PC-9 (cell line): ENCODE measurements at regions of chr2 and their contacts with region 1.

Region 1: DNA sequence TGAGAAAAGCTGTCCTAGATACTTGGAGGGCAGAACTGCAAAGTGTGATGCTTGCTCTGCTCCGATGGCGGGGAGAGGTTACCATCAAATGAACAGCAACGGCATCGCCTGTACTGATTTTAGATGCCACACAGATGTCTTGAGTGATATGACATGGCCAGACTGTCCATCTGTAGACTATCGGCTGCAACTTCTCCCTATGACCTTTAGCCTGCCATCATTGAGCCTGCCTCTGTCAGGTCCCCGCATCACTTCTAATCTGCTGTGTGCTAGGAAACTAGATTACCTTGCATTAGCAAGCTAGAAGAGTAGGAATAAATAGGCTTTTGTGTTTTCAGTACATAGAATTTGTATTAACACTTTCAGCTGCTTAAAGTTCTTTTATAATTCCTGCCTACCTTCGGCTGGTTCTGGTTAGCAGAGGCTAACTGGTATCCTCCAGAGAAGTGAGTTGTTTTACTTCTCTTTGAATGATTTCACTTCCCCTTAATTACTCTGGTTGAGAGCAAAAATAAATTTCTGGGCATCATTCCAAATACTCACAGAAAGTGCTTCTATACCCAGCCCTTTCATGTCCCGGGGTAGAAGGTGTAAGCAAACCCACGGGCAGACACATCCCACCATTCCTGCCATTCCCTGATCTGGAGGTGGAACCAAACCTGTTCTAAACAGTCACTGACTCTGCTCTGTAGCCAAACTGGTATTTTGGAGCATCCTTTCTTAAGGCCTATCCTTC is 24.0 kb downstream of the GAREM2 start:
- DNase-seq: no peak
- H3K4me3 ChIP-seq: no peak overlapping the region
- H3K27ac ChIP-seq: no peak overlapping the region
- H3K4me1 ChIP-seq: no peaks in the 10 kb centered on the region
- H3K27me3 ChIP-seq: no peaks in the 10 kb centered on the region
- CTCF ChIP-seq: no peak

Region 2: DNA sequence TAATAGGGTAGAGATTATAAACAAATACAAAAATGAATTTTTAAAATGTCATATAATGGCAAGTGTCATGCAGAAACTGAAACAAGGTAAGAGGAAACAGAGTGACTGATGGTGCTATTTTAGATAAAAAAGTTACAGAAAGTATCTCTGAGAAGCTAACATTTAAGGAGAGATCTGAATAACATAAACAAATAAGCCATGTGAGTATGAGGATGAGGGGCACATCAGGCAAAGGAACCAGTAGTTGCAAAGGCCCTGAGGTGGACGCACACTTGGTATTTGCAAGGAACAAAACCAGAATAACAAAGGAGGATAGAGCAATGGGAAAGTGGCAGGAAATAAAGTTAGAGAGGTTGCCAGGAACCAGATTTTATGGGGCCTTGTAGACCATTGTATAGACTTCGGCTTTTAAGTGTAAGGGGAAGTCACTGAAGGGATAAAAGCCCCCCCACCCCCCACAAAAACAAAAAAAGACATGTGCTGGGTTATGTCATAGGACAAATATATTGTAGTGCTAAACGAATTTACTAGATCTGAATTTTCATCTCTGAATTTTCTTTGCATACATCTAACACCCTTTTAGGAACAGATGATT is 682.7 kb before region 1 on chr2:
- CTCF ChIA-PET with region 1: no interaction called
- POLR2A ChIA-PET with region 1: no interaction called
- intact Hi-C with region 1: no loop called
- DNase-seq: no peak
- H3K4me3 ChIP-seq: no peak overlapping the region
- H3K27ac ChIP-seq: peak overlapping the region; percentile 56
- H3K4me1 ChIP-seq: peaks cover 35% of the 10 kb centered on the region
- H3K27me3 ChIP-seq: no peaks in the 10 kb centered on the region
- CTCF ChIP-seq: no peak

Region 3: GRCh38 chr2:25938345-25938744 is 258.5 kb before region 1 on chr2:
- CTCF ChIA-PET with region 1: no interaction called
- POLR2A ChIA-PET with region 1: interaction called, 12 read pairs
- intact Hi-C with region 1: no loop called
- DNase-seq: no peak
- H3K4me3 ChIP-seq: no peak overlapping the region
- H3K27ac ChIP-seq: no peak overlapping the region
- H3K4me1 ChIP-seq: peaks cover 9% of the 10 kb centered on the region
- H3K27me3 ChIP-seq: no peaks in the 10 kb centered on the region
- CTCF ChIP-seq: no peak